BJ (cell line): ENCODE measurements at regions of chr9 and their contacts with region 1.

Region 1: DNA sequence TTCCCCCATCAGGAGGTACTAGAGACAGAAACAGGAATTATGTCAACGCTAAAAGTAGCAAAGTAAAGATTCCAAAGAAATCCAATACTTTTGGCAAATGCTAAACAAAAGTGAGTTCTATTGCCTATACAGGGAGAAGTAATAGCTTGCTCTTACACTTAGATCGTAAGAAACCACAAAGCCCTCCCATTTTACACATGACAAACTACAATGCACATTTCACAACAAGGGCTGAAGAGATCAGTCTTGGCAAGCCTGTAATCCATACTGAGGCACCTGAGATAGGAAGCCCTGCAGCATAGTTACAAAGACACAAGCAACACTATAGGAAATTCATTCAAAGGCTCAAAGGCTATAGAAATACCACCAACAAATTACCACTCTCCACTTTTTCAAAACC is 7.7 kb downstream of the HNRNPK start:
- DNase-seq: no peak
- H3K4me3 ChIP-seq: no peak overlapping the region
- H3K27me3 ChIP-seq: no peaks in the 10 kb centered on the region
- CTCF ChIP-seq: no peak

Region 2: GRCh38 chr9:83959061-83959460 is 13.2 kb before region 1 on chr9:
- CTCF ChIA-PET with region 1: interaction called, 7 read pairs
- POLR2A ChIA-PET with region 1: interaction called, 12 read pairs
- DNase-seq: peak; percentile 92
- H3K4me3 ChIP-seq: no peak overlapping the region
- H3K27me3 ChIP-seq: no peaks in the 10 kb centered on the region
- CTCF ChIP-seq: no peak